Ascending aorta (tissue), 2 donors: ENCODE measurements at regions of chr22 and their contacts with region 1.

Region 1: GRCh38 chr22:38272373-38273134 is at the start of gene TMEM184B:
- DNase-seq: peak in 1 of 2 donors; percentile 88
- H3K4me3 ChIP-seq: peak within 1 kb of the TSS; percentile 90 to 92
- H3K27ac ChIP-seq: peak within 1 kb of the TSS; percentile 96
- H3K4me1 ChIP-seq: peaks cover 8 to 34% of the 10 kb centered on the region in 2 donors
- H3K27me3 ChIP-seq: no peaks in the 10 kb centered on the region
- CTCF ChIP-seq: peak in 1 of 3 experiments; percentile 17
- total RNA-seq, gene TMEM184B: 118 TPM

Region 2: GRCh38 chr22:38214256-38215056 is 58.1 kb before region 1 on chr22:
- intact Hi-C with region 1: loop called (anchors 5 kb)
- DNase-seq: no peak
- H3K4me3 ChIP-seq: peak overlapping the region in 1 of 2 donors; percentile 50
- H3K27ac ChIP-seq: peak overlapping the region; percentile 30 to 35
- H3K4me1 ChIP-seq: peaks cover 21 to 29% of the 10 kb centered on the region in 2 donors
- H3K27me3 ChIP-seq: no peaks in the 10 kb centered on the region
- CTCF ChIP-seq: peak in 1 of 3 experiments; percentile 24

Region 3: GRCh38 chr22:38317122-38317994 is 44.8 kb after region 1 on chr22 and contains the start of gene CSNK1E:
- intact Hi-C with region 1: loop called (anchors 2 kb)
- DNase-seq: peak; percentile 31 to 88
- H3K4me3 ChIP-seq: peak within 1 kb of the TSS; percentile 69 to 92
- H3K27ac ChIP-seq: peak within 1 kb of the TSS; percentile 97 to 100
- H3K4me1 ChIP-seq: peaks cover 10 to 37% of the 10 kb centered on the region in 2 donors
- H3K27me3 ChIP-seq: no peaks in the 10 kb centered on the region
- CTCF ChIP-seq: no peak
- total RNA-seq, gene CSNK1E: 185 TPM